ENCODE measurements at regions of chr10 and their contacts with region 1.

Region 1: GRCh38 chr10:68208424-68209042 is 23.4 kb downstream of the ATOH7 start:
- DNase-seq: no peak
- H3K4me3 Mint-ChIP-seq: no peak overlapping the region
- H3K27ac Mint-ChIP-seq: no peak overlapping the region
- H3K4me1 Mint-ChIP-seq: no peaks in the 10 kb centered on the region
- H3K27me3 Mint-ChIP-seq: peaks cover 18% of the 10 kb centered on the region

Region 2: DNA sequence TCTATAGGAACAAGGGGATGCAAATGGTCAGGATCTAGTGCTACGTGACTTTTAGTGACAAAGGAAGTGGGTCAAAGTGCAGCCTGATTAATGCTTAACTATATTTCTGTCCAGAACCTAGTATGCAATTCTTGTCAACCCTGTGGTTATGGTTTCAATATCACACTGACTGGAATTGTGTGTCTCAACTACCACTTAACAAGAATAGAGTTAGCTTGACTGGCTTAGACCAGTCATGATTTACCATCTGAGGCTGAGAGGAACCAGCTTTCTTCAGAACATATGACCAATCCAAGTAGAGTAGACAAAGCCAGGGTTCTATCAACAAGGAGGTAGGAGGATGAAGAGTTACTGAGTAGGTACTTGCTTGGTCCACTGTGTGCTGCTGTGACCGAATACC is 44.8 kb before region 1 on chr10:
- intact Hi-C with region 1: no loop called
- DNase-seq: no peak
- H3K4me3 Mint-ChIP-seq: no peak overlapping the region
- H3K27ac Mint-ChIP-seq: no peak overlapping the region
- H3K4me1 Mint-ChIP-seq: peaks cover 13% of the 10 kb centered on the region
- H3K27me3 Mint-ChIP-seq: no peaks in the 10 kb centered on the region

Region 3: GRCh38 chr10:68301790-68302502 is 93.4 kb after region 1 on chr10:
- intact Hi-C with region 1: loop called (anchors 1 kb)
- DNase-seq: no peak
- H3K4me3 Mint-ChIP-seq: no peak overlapping the region
- H3K27ac Mint-ChIP-seq: no peak overlapping the region
- H3K4me1 Mint-ChIP-seq: no peaks in the 10 kb centered on the region
- H3K27me3 Mint-ChIP-seq: no peaks in the 10 kb centered on the region

Region 4: GRCh38 chr10:68348265-68348741 is 139.8 kb after region 1 on chr10:
- intact Hi-C with region 1: loop called (anchors 1 kb)
- DNase-seq: peak; percentile 10
- H3K4me3 Mint-ChIP-seq: no peak overlapping the region
- H3K27ac Mint-ChIP-seq: peak overlapping the region; percentile 13
- H3K4me1 Mint-ChIP-seq: peaks cover 17% of the 10 kb centered on the region
- H3K27me3 Mint-ChIP-seq: no peaks in the 10 kb centered on the region

Region 5: DNA sequence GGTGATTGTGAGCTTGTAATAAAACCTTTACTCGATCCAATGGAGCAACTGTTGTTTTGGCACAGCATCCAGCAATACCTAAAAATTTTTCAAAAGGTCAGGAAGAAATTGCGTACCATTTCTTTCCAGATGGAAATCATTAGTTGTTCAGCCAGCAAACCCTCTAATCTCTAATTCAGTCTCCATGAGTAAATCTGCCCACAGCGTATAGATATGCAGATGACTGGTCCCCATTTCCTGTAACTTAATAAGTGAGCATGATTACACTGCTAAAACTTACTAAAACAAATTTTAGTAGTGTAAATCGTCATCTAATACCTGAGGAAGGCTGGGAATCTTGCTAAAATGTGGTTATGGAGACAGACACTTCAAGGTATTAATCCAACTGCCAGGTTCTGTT is 308.2 kb after region 1 on chr10:
- intact Hi-C with region 1: no loop called
- DNase-seq: no peak
- H3K4me3 Mint-ChIP-seq: no peak overlapping the region
- H3K27ac Mint-ChIP-seq: no peak overlapping the region
- H3K4me1 Mint-ChIP-seq: no peaks in the 10 kb centered on the region
- H3K27me3 Mint-ChIP-seq: no peaks in the 10 kb centered on the region

Measured in activated T-helper 1 cell treated with anti-CD3 and anti-CD28 coated beads, Interleukin-12 subunit alpha, Interleukin-12 subunit beta, Interleukin-2, Interleukin-4 antibody, amounts not matched to agents 30 ng/mL and 10 ng/mL and 1 ng/mL, durations not matched to agents 14 hours and 24 hours and 36 hours (primary cell).